PC-3 (cell line): ENCODE measurements at regions of chr1 and their contacts with region 1.

Region 1: GRCh38 chr1:116724765-116725375 is 29.4 kb upstream of the CD2 start:
- DNase-seq: peak; percentile 76
- ATAC-seq: peak; percentile 29; the same call in 1 of the 2 replicates
- H3K4me3 ChIP-seq: no peak overlapping the region
- H3K27ac ChIP-seq: no peak overlapping the region
- H3K4me1 ChIP-seq: no peaks in the 10 kb centered on the region
- H3K27me3 ChIP-seq: no peaks in the 10 kb centered on the region
- CTCF ChIP-seq: peak; percentile 89

Region 2: GRCh38 chr1:116817582-116818064 is 92.8 kb after region 1 on chr1:
- CTCF ChIA-PET with region 1: no interaction called
- POLR2A ChIA-PET with region 1: no interaction called
- intact Hi-C with region 1: loop called (anchors 5 kb)
- DNase-seq: peak; percentile 79
- ATAC-seq: peak; percentile 93
- H3K4me3 ChIP-seq: no peak overlapping the region
- H3K27ac ChIP-seq: no peak overlapping the region
- H3K4me1 ChIP-seq: 0 out of 2 replicates have a peak, but pooled peaks cover 10% of the 10 kb centered on the region
- H3K27me3 ChIP-seq: no peaks in the 10 kb centered on the region
- CTCF ChIP-seq: peak; percentile 97